ENCODE measurements at regions of chr4 and their contacts with region 1.

Region 1: GRCh38 chr4:88104902-88105610 is 53.4 kb downstream of the ABCG2 start:
- DNase-seq: peak; percentile 91
- ATAC-seq: peak; percentile 69
- H3K4me3 ChIP-seq: 0 out of 2 replicates have a peak overlapping the region, but pooled peaks have one; percentile 6
- H3K27ac ChIP-seq: peak overlapping the region; percentile 70
- H3K4me1 ChIP-seq: peaks cover 47% of the 10 kb centered on the region
- H3K27me3 ChIP-seq: no peaks in the 10 kb centered on the region
- CTCF ChIP-seq: no peak

Region 2: GRCh38 chr4:88143504-88143903 is 38.4 kb after region 1 on chr4:
- CTCF ChIA-PET with region 1: no interaction called
- POLR2A ChIA-PET with region 1: no interaction called
- intact Hi-C with region 1: loop called (anchors 5 kb)
- DNase-seq: peak; percentile 90
- ATAC-seq: peak; percentile 77
- H3K4me3 ChIP-seq: 0 out of 2 replicates have a peak overlapping the region, but pooled peaks have one; percentile 21
- H3K27ac ChIP-seq: peak overlapping the region; percentile 97
- H3K4me1 ChIP-seq: peaks cover 49% of the 10 kb centered on the region
- H3K27me3 ChIP-seq: no peaks in the 10 kb centered on the region
- CTCF ChIP-seq: no peak

Region 3: DNA sequence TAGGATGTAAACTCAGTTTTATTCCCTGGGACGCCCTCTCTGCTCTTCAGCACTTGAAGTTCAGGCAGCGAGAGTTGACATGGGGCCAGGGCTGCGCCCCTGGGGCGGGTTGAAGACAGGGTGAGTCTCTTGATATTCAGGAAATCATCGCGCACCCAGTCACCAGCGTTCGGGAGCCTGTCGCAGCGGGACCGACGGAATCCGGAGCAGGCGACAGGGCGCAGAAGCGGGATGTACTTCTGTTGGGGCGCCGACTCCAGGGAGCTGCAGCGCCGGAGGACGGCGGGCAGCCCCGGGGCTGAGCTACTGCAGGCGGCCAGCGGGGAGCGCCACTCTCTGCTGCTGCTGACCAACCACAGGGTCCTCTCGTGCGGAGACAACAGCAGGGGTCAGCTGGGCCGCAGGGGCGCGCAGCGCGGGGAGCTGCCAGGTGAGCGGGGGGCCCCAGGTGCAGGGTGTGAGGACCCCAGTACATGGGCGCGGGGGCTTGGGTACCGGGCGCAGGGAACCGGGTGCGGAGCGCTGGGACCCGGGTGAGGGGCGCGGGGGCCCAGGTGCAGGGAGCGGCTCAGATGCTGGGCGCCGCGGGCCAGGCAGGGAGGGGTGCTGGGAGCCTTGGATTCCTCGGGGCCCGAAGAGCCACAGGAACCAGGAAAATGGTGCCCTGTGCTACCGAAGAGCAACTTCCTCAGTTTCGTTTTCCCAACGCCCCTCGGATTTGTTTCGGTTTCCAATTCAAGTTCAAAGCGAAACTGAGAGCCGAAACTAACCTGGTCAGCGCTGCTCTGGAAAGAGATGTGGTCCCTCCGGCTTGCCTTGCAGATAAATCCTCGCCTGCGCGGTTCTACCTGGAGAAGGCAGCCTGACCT is 273.9 kb after region 1 on chr4 and contains the start of gene HERC6:
- CTCF ChIA-PET with region 1: no interaction called
- POLR2A ChIA-PET with region 1: interaction called, 21 read pairs
- intact Hi-C with region 1: no loop called
- DNase-seq: peak; percentile 71
- ATAC-seq: peak; percentile 96
- H3K4me3 ChIP-seq: peak within 1 kb of the TSS; percentile 97
- H3K27ac ChIP-seq: peak within 1 kb of the TSS; percentile 58
- H3K4me1 ChIP-seq: no peaks in the 10 kb centered on the region
- H3K27me3 ChIP-seq: no peaks in the 10 kb centered on the region
- CTCF ChIP-seq: peak; percentile 64
- total RNA-seq, gene HERC6: 4.8 and 7.2 TPM in 2 replicates